ENCODE measurements at regions of chr6 and their contacts with region 1.

Region 1: GRCh38 chr6:27893059-27893835 is 18.9 kb downstream of the OR2B2 start:
- DNase-seq: peak; percentile 98
- ATAC-seq: peak; percentile 60
- H3K4me3 ChIP-seq: peak overlapping the region; percentile 97
- H3K27ac ChIP-seq: peak overlapping the region; percentile 92
- H3K4me1 ChIP-seq: peaks cover 13% of the 10 kb centered on the region; the same call in 1 of the 2 replicates
- H3K27me3 ChIP-seq: no peaks in the 10 kb centered on the region
- CTCF ChIP-seq: no peak
- EP300 ChIP-seq: no peak
- POLR2A ChIP-seq: peak; percentile 96
- RAD21 ChIP-seq: no peak

Region 2: DNA sequence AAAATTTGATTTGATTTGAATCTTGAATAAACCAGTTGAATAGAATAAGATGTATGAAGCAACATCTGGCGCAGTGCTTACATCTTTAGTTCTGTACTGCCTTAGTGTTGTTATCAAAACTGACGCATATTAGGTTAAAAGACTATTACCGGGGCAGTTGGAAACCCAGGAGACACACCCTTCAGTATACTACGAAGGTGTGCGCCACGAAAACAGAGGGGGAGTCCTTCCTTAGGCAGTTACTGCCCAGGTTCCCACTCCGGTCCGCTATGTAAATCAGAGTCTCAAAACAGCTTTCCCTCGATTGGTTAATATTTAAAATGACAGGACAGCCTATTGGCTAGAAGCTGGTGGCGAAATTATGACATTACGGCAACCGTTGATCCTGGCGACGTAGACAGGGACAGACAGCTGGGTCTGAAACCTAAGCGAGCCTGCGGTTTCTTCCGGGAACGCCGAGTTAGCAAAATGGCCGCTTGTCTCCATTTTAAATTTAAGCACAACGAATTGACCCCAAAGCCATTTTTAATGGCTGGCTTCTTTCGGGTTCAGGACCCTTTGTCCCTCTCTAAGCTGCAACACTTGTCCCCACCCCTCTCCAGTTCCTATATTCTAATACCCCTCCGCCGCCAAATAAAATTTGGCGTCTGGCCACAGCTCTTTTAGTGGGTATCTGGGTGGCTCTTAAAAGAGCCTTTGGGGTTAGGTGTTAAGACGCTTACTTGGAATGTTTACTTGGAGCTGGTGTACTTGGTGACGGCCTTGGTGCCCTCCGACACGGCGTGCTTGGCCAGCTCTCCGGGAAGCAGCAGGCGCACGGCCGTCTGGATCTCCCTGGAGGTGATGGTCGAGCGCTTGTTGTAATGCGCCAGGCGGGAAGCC is 1770.2 kb before region 1 on chr6:
- CTCF ChIA-PET with region 1: no interaction called
- POLR2A ChIA-PET with region 1: interaction called, 5 read pairs
- RAD21 ChIA-PET with region 1: interaction called, 3 read pairs
- SMC1A ChIA-PET with region 1: no interaction called
- in situ Hi-C with region 1: no loop called
- intact Hi-C with region 1: loop called (anchors 1 kb)
- DNase-seq: peak; percentile 99
- ATAC-seq: peak; percentile 71
- H3K4me3 ChIP-seq: peak overlapping the region; percentile 65
- H3K27ac ChIP-seq: peak overlapping the region; percentile 95
- H3K4me1 ChIP-seq: peaks cover 3% of the 10 kb centered on the region; the same call in 1 of the 2 replicates
- H3K27me3 ChIP-seq: no peaks in the 10 kb centered on the region
- CTCF ChIP-seq: no peak
- EP300 ChIP-seq: peak; percentile 85 to 93; a peak in 3 of 4 replicates
- POLR2A ChIP-seq: peak; percentile 86
- RAD21 ChIP-seq: no peak

Region 3: GRCh38 chr6:27132532-27133280 is 760.5 kb before region 1 on chr6:
- CTCF ChIA-PET with region 1: interaction called, 10 read pairs
- POLR2A ChIA-PET with region 1: interaction called, 7 read pairs
- RAD21 ChIA-PET with region 1: interaction called, 8 read pairs
- SMC1A ChIA-PET with region 1: interaction called, 10 read pairs
- in situ Hi-C with region 1: loop called (anchors 5 kb)
- intact Hi-C with region 1: loop called (anchors 2 kb)
- DNase-seq: peak; percentile 100
- ATAC-seq: peak; percentile 72
- H3K4me3 ChIP-seq: peak overlapping the region; percentile 65
- H3K27ac ChIP-seq: peak overlapping the region; percentile 94
- H3K4me1 ChIP-seq: peaks cover 22% of the 10 kb centered on the region
- H3K27me3 ChIP-seq: no peaks in the 10 kb centered on the region
- CTCF ChIP-seq: no peak
- EP300 ChIP-seq: peak in 1 of 2 experiments; percentile 20; a peak in 1 of 4 replicates
- POLR2A ChIP-seq: peak; percentile 93
- RAD21 ChIP-seq: no peak

Region 4: GRCh38 chr6:27518881-27519795 is 374.1 kb before region 1 on chr6:
- CTCF ChIA-PET with region 1: interaction called, 10 read pairs
- POLR2A ChIA-PET with region 1: no interaction called
- RAD21 ChIA-PET with region 1: interaction called, 12 read pairs
- SMC1A ChIA-PET with region 1: interaction called, 4 read pairs
- in situ Hi-C with region 1: no loop called
- intact Hi-C with region 1: no loop called
- DNase-seq: peak; percentile 83
- ATAC-seq: peak; percentile 92
- H3K4me3 ChIP-seq: peak overlapping the region; percentile 83
- H3K27ac ChIP-seq: peak overlapping the region; percentile 67
- H3K4me1 ChIP-seq: no peaks in the 10 kb centered on the region
- H3K27me3 ChIP-seq: 0 out of 4 replicates have a peak, but pooled peaks cover 0 to 5% of the 10 kb centered on the region in 2 experiments
- CTCF ChIP-seq: peak; percentile 61 to 72 (median 69)
- EP300 ChIP-seq: peak in 1 of 2 experiments; percentile 15; a peak in 1 of 4 replicates
- POLR2A ChIP-seq: no peak
- RAD21 ChIP-seq: peak; percentile 68

Region 5: GRCh38 chr6:27809939-27810767 is 83.1 kb before region 1 on chr6:
- CTCF ChIA-PET with region 1: interaction called, 61 read pairs
- POLR2A ChIA-PET with region 1: interaction called, 119 read pairs
- RAD21 ChIA-PET with region 1: interaction called, 112 read pairs
- SMC1A ChIA-PET with region 1: interaction called, 57 read pairs
- in situ Hi-C with region 1: no loop called
- intact Hi-C with region 1: loop called (anchors 2 kb)
- DNase-seq: peak; percentile 98
- ATAC-seq: peak; percentile 43
- H3K4me3 ChIP-seq: peak overlapping the region; percentile 74
- H3K27ac ChIP-seq: peak overlapping the region; percentile 82
- H3K4me1 ChIP-seq: peaks cover 25% of the 10 kb centered on the region
- H3K27me3 ChIP-seq: no peaks in the 10 kb centered on the region
- CTCF ChIP-seq: peak in 1 of 3 experiments; percentile 19; a peak in 2 of 6 replicates
- EP300 ChIP-seq: no peak
- POLR2A ChIP-seq: peak; percentile 95
- RAD21 ChIP-seq: no peak

Region 6: DNA sequence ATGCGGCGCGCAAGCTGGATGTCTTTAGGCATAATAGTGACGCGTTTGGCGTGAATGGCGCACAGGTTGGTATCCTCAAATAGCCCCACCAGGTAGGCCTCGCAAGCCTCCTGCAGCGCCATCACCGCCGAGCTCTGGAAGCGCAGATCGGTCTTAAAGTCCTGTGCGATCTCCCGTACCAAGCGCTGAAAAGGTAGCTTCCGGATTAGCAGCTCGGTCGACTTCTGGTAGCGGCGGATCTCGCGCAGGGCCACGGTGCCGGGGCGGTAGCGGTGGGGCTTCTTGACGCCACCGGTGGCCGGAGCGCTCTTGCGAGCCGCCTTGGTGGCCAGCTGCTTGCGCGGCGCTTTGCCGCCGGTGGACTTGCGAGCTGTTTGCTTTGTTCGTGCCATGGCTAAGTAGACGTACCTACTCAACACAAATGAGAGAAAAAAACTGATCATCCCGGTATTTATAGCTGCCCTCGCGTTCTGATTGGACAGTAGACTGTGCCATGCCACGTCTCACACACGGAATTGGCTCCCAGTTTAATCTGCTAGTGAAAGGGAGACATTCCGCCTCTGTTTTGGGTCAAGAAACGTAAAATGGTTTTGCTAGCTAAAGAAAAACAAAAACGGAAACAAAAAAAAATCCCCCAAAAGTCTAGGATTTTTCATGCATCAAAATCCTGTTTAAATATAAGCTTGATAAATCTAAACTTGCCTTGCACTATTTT is 21.2 kb before region 1 on chr6:
- CTCF ChIA-PET with region 1: interaction called, 19 read pairs
- POLR2A ChIA-PET with region 1: interaction called, 45 read pairs
- RAD21 ChIA-PET with region 1: interaction called, 32 read pairs
- SMC1A ChIA-PET with region 1: interaction called, 21 read pairs
- in situ Hi-C with region 1: no loop called
- intact Hi-C with region 1: loop called (anchors 2 kb)
- DNase-seq: peak; percentile 99
- ATAC-seq: peak; percentile 73
- H3K4me3 ChIP-seq: peak overlapping the region; percentile 69
- H3K27ac ChIP-seq: peak overlapping the region; percentile 97
- H3K4me1 ChIP-seq: peaks cover 20% of the 10 kb centered on the region
- H3K27me3 ChIP-seq: no peaks in the 10 kb centered on the region
- CTCF ChIP-seq: peak; percentile 29 to 44 (median 43); a peak in 5 of 6 replicates
- EP300 ChIP-seq: no peak
- POLR2A ChIP-seq: peak; percentile 97
- RAD21 ChIP-seq: no peak